AG04449 (cell line): ENCODE measurements at regions of chr7 and their contacts with region 1.

Region 1: GRCh38 chr7:6323967-6324701 is 51.7 kb upstream of the CYTH3 start:
- DNase-seq: no peak
- H3K4me3 ChIP-seq: no peak overlapping the region
- CTCF ChIP-seq: no peak

Region 2: GRCh38 chr7:5997222-5997808 is 326.8 kb before region 1 on chr7:
- CTCF ChIA-PET with region 1: interaction called, 19 read pairs
- POLR2A ChIA-PET with region 1: no interaction called
- DNase-seq: no peak
- H3K4me3 ChIP-seq: no peak overlapping the region
- CTCF ChIP-seq: peak; percentile 62

Region 3: DNA sequence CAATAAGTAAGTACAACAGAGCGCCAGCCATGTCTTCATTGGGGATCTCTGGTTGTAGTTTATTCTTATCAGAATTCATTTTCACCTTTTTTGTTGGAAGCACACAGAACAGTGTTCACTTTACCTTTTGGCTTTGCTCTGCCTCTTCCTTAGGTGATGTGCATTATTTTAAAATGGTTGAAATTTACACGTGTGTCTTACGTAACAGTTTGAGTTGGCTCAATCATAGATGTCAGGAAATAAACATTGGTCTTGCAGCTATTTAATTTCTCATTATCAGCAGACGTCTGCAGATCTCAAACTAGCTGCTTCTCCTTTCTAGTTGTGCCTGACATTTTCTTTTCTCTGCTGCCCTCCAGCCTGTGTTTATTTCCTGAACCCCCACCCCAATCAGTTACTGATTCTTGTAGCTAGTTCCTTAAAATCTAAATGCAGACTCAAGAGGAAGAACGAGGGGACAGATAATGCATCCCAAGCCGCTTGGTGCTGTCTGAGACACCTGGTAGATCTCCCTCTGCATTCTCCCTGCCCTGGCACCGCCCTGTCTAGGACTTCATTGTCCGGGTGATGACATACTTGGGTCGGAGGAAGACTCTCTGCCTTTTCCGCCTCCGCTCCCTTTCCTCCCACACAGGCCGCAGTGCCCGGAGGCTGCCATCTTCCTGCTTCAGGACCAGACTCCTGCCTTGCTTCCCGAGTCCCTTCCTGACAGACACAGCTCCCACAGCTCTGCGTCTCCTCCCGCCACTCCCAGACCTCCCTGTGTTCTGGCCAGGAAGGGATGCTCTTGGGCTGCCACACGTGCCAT is 184.7 kb before region 1 on chr7:
- CTCF ChIA-PET with region 1: interaction called, 13 read pairs
- POLR2A ChIA-PET with region 1: no interaction called
- DNase-seq: no peak
- H3K4me3 ChIP-seq: no peak overlapping the region
- CTCF ChIP-seq: no peak

Region 4: GRCh38 chr7:6172224-6172923 is 151.8 kb before region 1 on chr7:
- CTCF ChIA-PET with region 1: interaction called, 14 read pairs
- POLR2A ChIA-PET with region 1: no interaction called
- DNase-seq: no peak
- H3K4me3 ChIP-seq: no peak overlapping the region
- CTCF ChIP-seq: no peak

Region 5: GRCh38 chr7:6248581-6248980 is 75.6 kb before region 1 on chr7:
- CTCF ChIA-PET with region 1: interaction called, 14 read pairs
- POLR2A ChIA-PET with region 1: interaction called, 3 read pairs
- DNase-seq: no peak
- H3K4me3 ChIP-seq: peak overlapping the region; percentile 16
- CTCF ChIP-seq: no peak

Region 6: DNA sequence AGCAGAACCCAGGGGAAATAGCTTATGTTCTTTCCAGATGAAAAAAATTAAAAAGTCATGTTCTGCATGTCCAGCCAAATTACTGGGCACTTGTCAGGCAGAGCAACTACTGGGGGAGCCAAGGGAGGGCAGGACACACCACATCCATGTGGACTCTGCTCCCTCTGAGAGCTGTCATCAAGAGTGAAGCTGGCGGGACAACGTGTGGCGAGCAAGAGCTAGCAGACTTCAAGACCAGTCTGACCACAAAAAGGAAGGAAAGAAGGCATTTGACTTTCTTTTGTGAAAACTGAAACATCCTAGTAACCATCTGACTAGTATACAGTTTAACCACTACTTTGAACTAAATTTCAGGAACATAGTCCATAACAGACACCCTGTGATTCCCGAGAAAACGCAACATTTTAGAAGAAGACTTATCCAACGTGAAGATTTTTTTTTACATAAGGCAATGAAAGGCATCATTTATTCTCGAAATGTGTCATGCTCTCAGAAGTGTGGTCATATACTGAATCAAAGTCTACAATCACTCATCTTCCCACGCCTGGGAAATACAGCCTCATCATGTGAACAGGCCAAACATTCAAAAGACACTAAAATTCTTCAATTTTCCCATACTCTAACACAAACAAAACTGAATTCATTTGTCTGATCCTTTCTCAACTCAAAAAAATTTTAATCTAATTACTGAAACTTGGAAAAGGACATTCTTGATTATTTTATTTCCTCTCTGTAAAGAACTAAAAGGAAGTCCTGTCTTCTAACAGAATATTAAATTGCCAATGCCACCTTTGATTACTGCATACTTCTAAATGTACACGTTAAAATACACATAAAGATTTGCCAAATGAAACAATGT is 67.2 kb before region 1 on chr7:
- CTCF ChIA-PET with region 1: interaction called, 15 read pairs
- POLR2A ChIA-PET with region 1: no interaction called
- DNase-seq: no peak
- H3K4me3 ChIP-seq: no peak overlapping the region
- CTCF ChIP-seq: no peak

Region 7: GRCh38 chr7:6338551-6339274 is 14.6 kb after region 1 on chr7:
- CTCF ChIA-PET with region 1: interaction called, 11 read pairs
- POLR2A ChIA-PET with region 1: no interaction called
- DNase-seq: no peak
- H3K4me3 ChIP-seq: no peak overlapping the region
- CTCF ChIP-seq: no peak